Sigmoid colon (tissue), 7 donors: ENCODE measurements at regions of chr7 and their contacts with region 1.

Region 1: GRCh38 chr7:45136106-45137060 is 21.2 kb upstream of the RAMP3 start:
- DNase-seq: no peak
- H3K4me3 ChIP-seq: no peak overlapping the region
- H3K27ac ChIP-seq: no peak overlapping the region
- H3K4me1 ChIP-seq: no peaks in the 10 kb centered on the region
- H3K27me3 ChIP-seq: no peaks in the 10 kb centered on the region
- CTCF ChIP-seq: peak; percentile 54 to 77 (median 73)
- EP300 ChIP-seq: no peak
- POLR2A ChIP-seq: no peak

Region 2: GRCh38 chr7:44858161-44858560 is 278.2 kb before region 1 on chr7:
- intact Hi-C with region 1: loop called (anchors 5 kb)
- DNase-seq: no peak
- H3K4me3 ChIP-seq: no peak overlapping the region
- H3K27ac ChIP-seq: no peak overlapping the region
- H3K4me1 ChIP-seq: no peaks in the 10 kb centered on the region
- H3K27me3 ChIP-seq: no peaks in the 10 kb centered on the region
- CTCF ChIP-seq: no peak
- EP300 ChIP-seq: no peak
- POLR2A ChIP-seq: no peak

Region 3: GRCh38 chr7:44967571-44968446 is 168.6 kb before region 1 on chr7:
- intact Hi-C with region 1: loop called (anchors 2 kb)
- DNase-seq: peak; percentile 63
- H3K4me3 ChIP-seq: no peak overlapping the region
- H3K27ac ChIP-seq: no peak overlapping the region
- H3K4me1 ChIP-seq: peaks cover 0 to 6% (median 4%) of the 10 kb centered on the region in 4 donors
- H3K27me3 ChIP-seq: peaks cover 0 to 6% (median 0%) of the 10 kb centered on the region in 3 donors
- CTCF ChIP-seq: no peak
- EP300 ChIP-seq: no peak
- POLR2A ChIP-seq: no peak

Region 4: DNA sequence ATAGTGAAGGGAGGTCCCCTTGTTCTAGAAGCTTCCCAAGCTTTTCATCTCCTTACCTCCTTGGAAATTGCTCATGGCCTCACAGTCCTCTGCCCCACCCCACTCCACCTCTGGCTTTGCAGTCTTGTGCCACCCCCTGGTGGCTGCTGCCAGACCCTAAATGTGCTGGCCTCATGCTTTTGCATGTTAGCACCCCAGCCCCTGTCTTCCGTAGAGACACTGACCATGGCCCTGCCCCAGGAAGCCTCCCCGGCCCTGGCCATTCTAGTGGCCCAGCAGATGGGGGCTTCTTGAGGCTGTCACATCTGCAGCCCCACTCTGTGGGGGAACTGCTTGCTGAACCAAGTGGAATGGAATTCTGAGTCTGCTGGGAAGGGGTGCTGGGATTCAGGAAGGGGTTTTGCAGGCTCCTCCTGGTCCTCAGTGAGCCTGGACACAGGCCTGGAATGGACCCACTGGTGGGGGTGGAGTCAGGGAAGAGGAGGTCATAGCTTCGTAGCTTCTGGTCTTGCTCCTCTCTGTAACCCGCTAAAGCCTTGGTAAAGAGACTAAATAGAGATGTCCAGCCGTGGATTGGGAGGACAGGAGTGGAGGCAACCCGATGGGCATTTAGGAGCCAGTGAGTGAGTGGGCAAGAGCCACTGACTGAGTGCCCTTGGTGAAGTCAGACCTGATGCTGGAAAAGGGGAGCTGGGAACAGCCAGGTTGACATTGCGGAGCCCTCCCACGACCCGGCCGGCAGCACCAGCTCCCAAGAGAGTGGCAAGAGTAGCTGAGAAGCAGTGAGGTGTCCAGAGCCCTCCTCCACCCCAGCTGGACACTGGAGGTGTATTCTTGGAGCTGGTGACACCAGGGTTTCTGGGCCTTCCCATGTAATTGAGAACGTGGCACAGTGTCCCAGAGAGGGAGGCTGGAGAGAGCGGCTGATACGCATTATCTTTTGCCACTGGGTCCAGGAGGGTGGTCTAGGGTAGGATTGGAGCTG is 42.1 kb after region 1 on chr7:
- intact Hi-C with region 1: no loop called
- DNase-seq: peak; percentile 51
- H3K4me3 ChIP-seq: no peak overlapping the region
- H3K27ac ChIP-seq: no peak overlapping the region
- H3K4me1 ChIP-seq: no peaks in the 10 kb centered on the region
- H3K27me3 ChIP-seq: no peaks in the 10 kb centered on the region
- CTCF ChIP-seq: no peak
- EP300 ChIP-seq: no peak
- POLR2A ChIP-seq: no peak

Region 5: GRCh38 chr7:45306752-45307305 is 170.4 kb after region 1 on chr7:
- intact Hi-C with region 1: no loop called
- DNase-seq: no peak
- H3K4me3 ChIP-seq: no peak overlapping the region
- H3K27ac ChIP-seq: no peak overlapping the region
- H3K4me1 ChIP-seq: no peaks in the 10 kb centered on the region
- H3K27me3 ChIP-seq: no peaks in the 10 kb centered on the region
- CTCF ChIP-seq: no peak
- EP300 ChIP-seq: no peak
- POLR2A ChIP-seq: no peak